K562 (cell line): ENCODE measurements at regions of chr1 and their contacts with region 1.

Region 1: GRCh38 chr1:89953072-89953626 is 41.8 kb upstream of the ZNF326 start:
- DNase-seq: peak; percentile 37 to 84 (median 62)
- ATAC-seq: peak; percentile 97
- H3K4me3 ChIP-seq: no peak overlapping the region
- H3K27ac ChIP-seq: no peak overlapping the region; the same call in 2 of the 3 replicates
- H3K4me1 ChIP-seq: peaks cover 8 to 56% of the 10 kb centered on the region in 2 experiments; a peak in 4 of 5 replicates
- H3K27me3 ChIP-seq: no peaks in the 10 kb centered on the region
- CTCF ChIP-seq: peak; percentile 79 to 83 (median 80)
- EP300 ChIP-seq: peak; percentile 25; the same call in 1 of the 2 replicates
- POLR2A ChIP-seq: no peak
- RAD21 ChIP-seq: peak; percentile 92 to 94

Region 2: GRCh38 chr1:89804642-89805237 is 148.4 kb before region 1 on chr1:
- CTCF ChIA-PET with region 1: interaction called, 5 read pairs
- POLR2A ChIA-PET with region 1: interaction called, 3 read pairs
- in situ Hi-C with region 1: loop called (anchors 5 kb)
- intact Hi-C with region 1: loop called (anchors 1 kb)
- DNase-seq: peak; percentile 76 to 91 (median 79)
- ATAC-seq: peak; percentile 95
- H3K4me3 ChIP-seq: no peak overlapping the region
- H3K27ac ChIP-seq: no peak overlapping the region
- H3K4me1 ChIP-seq: peaks cover 4 to 23% of the 10 kb centered on the region in 2 experiments; a peak in 4 of 5 replicates
- H3K27me3 ChIP-seq: no peaks in the 10 kb centered on the region
- CTCF ChIP-seq: peak; percentile 92 to 96 (median 93)
- EP300 ChIP-seq: 0 out of 2 replicates have a peak, but pooled peaks have one; percentile 8
- POLR2A ChIP-seq: no peak
- RAD21 ChIP-seq: peak; percentile 98 to 99

Region 3: DNA sequence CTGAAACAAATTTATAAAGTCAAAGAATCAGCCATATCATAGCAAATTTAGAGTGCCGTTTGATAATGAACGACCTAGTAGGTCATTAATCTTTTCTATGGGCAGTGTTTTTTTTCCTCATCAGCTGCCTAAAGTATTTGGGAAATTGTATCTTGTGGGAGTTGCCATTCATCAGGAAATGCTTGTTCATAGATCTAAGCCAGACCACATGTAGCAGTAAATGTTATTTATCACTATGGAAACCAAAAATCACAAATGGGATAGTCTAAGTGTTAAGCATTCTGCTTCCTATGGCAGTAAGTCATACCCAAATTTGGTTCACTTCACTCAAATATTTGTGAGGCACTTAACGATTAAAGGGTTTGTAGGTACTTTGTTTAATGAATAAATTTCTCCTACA is 79.4 kb before region 1 on chr1:
- CTCF ChIA-PET with region 1: no interaction called
- POLR2A ChIA-PET with region 1: no interaction called
- in situ Hi-C with region 1: no loop called
- intact Hi-C with region 1: loop called (anchors 5 kb)
- DNase-seq: no peak
- ATAC-seq: peak; percentile 16; the same call in 1 of the 3 replicates
- H3K4me3 ChIP-seq: no peak overlapping the region
- H3K27ac ChIP-seq: peak overlapping the region; percentile 2; the same call in 1 of the 3 replicates
- H3K4me1 ChIP-seq: peaks cover 13 to 61% of the 10 kb centered on the region in 2 experiments
- H3K27me3 ChIP-seq: no peaks in the 10 kb centered on the region
- CTCF ChIP-seq: no peak
- EP300 ChIP-seq: no peak
- POLR2A ChIP-seq: no peak
- RAD21 ChIP-seq: no peak

Region 4: DNA sequence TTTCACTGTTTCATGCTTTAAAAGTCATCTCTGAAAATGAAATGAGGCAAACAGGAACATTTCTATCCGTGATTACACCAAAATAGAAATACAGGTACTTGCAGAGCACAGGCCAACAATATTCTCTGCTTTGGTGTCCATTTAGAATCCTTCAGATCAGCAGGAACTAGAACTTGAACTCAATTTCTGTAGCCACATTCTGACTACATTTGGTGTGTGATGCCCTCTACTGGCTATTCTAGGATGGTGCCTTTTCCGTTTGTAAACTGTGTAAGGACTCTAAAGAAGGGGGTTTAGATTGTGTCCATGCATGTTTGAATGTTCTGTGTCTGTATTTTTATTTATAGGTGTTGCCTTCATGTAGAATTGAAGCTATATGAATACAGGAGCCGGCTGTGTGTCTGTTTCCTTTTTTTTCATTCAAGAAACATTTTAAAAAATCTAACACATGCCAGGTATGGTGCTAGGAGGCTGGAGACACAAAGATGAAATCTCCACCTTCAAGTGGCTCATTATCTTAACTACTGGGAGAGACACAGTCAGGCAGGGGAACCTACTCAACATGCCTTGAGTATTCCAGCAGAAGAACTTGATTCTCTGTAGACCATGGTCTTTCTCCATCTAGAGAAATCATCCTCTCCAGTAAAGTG is 34.1 kb after region 1 on chr1:
- CTCF ChIA-PET with region 1: no interaction called
- POLR2A ChIA-PET with region 1: no interaction called
- in situ Hi-C with region 1: no loop called
- intact Hi-C with region 1: loop called (anchors 1 kb)
- DNase-seq: peak; percentile 46 to 82 (median 62)
- ATAC-seq: peak; percentile 91
- H3K4me3 ChIP-seq: no peak overlapping the region
- H3K27ac ChIP-seq: no peak overlapping the region
- H3K4me1 ChIP-seq: peaks cover 2 to 14% of the 10 kb centered on the region in 2 experiments; a peak in 4 of 5 replicates
- H3K27me3 ChIP-seq: no peaks in the 10 kb centered on the region
- CTCF ChIP-seq: peak; percentile 77 to 91 (median 88)
- EP300 ChIP-seq: 0 out of 2 replicates have a peak, but pooled peaks have one; percentile 17
- POLR2A ChIP-seq: no peak
- RAD21 ChIP-seq: peak; percentile 93 to 98